ENCODE measurements at regions of chr3 and their contacts with region 1.

Region 1: DNA sequence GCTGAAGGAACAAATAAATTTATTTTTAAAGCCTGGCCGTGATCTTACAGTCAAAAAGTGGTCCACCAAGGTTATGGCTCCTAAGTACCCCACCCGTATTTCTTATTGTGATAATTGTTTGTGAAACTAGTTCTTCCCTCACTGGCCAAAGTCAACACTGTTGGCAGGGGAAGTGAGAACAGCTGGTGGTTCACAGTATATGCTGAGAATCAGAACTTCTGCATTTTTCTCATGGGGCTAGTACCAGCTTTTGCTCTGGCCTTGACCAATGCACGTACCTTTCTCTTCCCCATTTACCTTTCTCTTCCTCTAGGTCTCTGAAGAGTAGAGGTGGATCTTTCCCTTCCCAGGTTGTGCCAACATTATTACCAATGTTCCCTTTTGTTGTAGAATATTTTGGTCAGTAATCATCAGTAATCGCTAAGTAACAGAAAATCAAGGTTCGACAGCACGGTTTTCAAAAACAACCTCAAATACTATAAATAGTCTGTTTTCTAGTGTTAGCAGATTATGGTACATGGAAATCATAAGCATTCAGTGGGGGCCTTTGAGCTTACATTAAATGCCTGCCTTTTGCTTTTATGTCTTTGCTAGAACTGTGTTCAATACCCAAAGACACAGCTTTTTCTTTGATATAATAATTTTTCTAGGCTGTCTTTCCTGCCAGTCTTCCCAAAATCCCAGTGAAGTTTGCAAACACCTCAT is 268.0 kb downstream of the LPP start:
- DNase-seq: peak; percentile 89
- ATAC-seq: peak; percentile 95
- H3K4me3 ChIP-seq: peak overlapping the region in 1 of 5 experiments; percentile 47
- H3K4me3 Mint-ChIP-seq: peak overlapping the region; percentile 74
- H3K27ac ChIP-seq: peak overlapping the region; percentile 89 to 94
- H3K27ac Mint-ChIP-seq: peak overlapping the region; percentile 98
- H3K4me1 ChIP-seq: peaks cover 59 to 72% of the 10 kb centered on the region in 2 donors
- H3K4me1 Mint-ChIP-seq: peaks cover 90% of the 10 kb centered on the region
- H3K27me3 ChIP-seq: no peaks in the 10 kb centered on the region
- H3K27me3 Mint-ChIP-seq: no peaks in the 10 kb centered on the region
- CTCF ChIP-seq: no peak

Region 2: DNA sequence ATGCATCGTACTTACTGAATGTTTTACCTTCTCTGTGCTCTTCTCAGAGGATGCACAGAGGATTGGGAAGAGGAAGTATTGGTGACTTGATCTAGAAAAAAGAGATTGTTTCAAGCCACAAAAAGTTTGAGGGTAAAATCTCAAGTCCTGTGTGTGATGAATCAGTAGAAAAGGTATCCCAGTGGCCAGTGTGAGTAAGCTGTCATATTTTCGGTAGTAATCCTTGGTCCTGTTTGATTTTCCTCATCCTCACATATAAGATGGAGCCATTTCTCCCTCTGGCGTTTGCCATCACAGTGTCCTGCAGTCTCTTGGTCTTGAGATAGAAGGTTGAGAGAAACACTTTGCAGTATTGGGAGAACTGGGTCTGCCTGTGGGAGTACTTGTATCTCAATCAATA is 101.2 kb before region 1 on chr3:
- CTCF ChIA-PET with region 1: no interaction called
- POLR2A ChIA-PET with region 1: no interaction called
- intact Hi-C with region 1: no loop called
- DNase-seq: no peak
- ATAC-seq: no peak
- H3K4me3 ChIP-seq: no peak overlapping the region
- H3K4me3 Mint-ChIP-seq: no peak overlapping the region
- H3K27ac ChIP-seq: no peak overlapping the region
- H3K27ac Mint-ChIP-seq: no peak overlapping the region
- H3K4me1 ChIP-seq: peaks cover 20% of the 10 kb centered on the region in 2 donors
- H3K4me1 Mint-ChIP-seq: peaks cover 50% of the 10 kb centered on the region
- H3K27me3 ChIP-seq: no peaks in the 10 kb centered on the region
- H3K27me3 Mint-ChIP-seq: no peaks in the 10 kb centered on the region
- CTCF ChIP-seq: no peak

Region 3: DNA sequence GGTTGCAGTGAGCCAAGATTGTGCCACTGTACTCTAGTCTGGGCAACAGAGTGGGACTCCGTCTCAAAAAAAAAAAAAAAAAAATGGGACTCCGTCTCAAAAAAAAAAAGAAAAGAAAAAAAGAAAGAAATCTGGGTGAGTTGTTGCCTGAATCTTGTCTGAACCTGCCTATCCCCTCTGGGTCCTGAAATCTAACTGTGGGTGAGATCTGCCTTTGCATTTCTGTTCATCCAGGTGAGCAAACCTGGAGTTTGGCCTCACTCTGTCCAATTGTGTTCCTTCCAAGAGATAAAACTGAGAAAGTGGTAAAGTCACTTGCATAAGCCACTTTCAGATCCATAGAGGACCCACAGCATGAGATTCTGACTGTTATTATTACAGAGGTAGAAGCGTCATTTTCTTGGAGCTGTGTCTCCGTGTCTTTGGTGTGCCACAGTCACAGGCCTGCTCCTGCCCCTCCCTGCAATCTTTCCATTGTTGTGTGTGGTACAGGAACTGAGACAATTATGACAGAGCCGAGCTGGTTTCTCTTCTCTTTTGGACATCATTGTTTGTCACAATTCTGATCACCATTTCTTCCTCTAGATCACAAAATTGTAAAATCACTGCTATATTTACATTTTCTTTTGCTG is 32.2 kb before region 1 on chr3:
- CTCF ChIA-PET with region 1: interaction called, 4 read pairs
- POLR2A ChIA-PET with region 1: interaction called, 6 read pairs
- intact Hi-C with region 1: loop called (anchors 1 kb)
- DNase-seq: peak; percentile 86
- ATAC-seq: peak; percentile 88
- H3K4me3 ChIP-seq: peak overlapping the region in 1 of 5 experiments; percentile 42
- H3K4me3 Mint-ChIP-seq: peak overlapping the region; percentile 82
- H3K27ac ChIP-seq: peak overlapping the region; percentile 94 to 96
- H3K27ac Mint-ChIP-seq: peak overlapping the region; percentile 99
- H3K4me1 ChIP-seq: peaks cover 55 to 75% of the 10 kb centered on the region in 2 donors
- H3K4me1 Mint-ChIP-seq: peaks cover 80% of the 10 kb centered on the region
- H3K27me3 ChIP-seq: no peaks in the 10 kb centered on the region
- H3K27me3 Mint-ChIP-seq: no peaks in the 10 kb centered on the region
- CTCF ChIP-seq: no peak

Region 4: DNA sequence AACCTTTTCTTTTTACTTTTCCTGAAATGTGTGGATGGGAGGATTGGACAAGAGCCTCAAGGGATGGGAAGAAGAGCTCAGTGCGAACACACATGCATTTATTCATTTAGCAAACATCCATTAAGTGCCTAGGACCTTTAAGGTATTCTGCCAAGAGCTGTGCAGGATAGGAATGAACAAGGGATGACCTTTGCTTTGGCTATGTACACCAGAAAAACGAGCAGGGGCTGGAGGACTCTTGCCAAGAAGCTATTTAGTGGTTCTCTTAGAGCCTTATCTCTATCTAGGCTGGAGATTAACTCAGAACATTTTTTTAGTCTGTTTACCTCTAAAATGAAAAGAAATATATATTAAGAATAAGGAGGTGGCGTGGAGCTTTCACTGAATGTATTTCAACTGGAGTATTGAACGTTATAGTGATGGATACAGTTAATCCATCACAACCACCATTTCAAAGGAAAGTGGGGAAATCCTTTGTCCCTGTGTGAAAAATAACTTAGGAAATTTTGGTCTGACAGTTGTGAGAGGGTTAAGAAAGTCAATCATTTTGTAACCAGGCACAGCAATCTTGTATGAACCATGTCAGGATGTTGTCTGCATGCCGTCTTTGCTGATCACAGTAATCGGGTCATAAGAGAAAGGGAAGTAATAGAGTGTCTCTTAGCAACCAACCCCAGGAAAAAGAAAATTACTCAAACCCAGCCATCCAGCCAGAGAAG is 11.0 kb after region 1 on chr3:
- CTCF ChIA-PET with region 1: interaction called, 12 read pairs
- POLR2A ChIA-PET with region 1: interaction called, 3 read pairs
- intact Hi-C with region 1: loop called (anchors 1 kb)
- DNase-seq: peak; percentile 75
- ATAC-seq: peak; percentile 85
- H3K4me3 ChIP-seq: peak overlapping the region in 2 of 5 experiments; percentile 25 to 39
- H3K4me3 Mint-ChIP-seq: peak overlapping the region; percentile 81
- H3K27ac ChIP-seq: peak overlapping the region; percentile 95 to 99
- H3K27ac Mint-ChIP-seq: peak overlapping the region; percentile 98
- H3K4me1 ChIP-seq: peaks cover 57 to 83% of the 10 kb centered on the region in 2 donors
- H3K4me1 Mint-ChIP-seq: peaks cover 81% of the 10 kb centered on the region
- H3K27me3 ChIP-seq: no peaks in the 10 kb centered on the region
- H3K27me3 Mint-ChIP-seq: no peaks in the 10 kb centered on the region
- CTCF ChIP-seq: no peak

Region 5: DNA sequence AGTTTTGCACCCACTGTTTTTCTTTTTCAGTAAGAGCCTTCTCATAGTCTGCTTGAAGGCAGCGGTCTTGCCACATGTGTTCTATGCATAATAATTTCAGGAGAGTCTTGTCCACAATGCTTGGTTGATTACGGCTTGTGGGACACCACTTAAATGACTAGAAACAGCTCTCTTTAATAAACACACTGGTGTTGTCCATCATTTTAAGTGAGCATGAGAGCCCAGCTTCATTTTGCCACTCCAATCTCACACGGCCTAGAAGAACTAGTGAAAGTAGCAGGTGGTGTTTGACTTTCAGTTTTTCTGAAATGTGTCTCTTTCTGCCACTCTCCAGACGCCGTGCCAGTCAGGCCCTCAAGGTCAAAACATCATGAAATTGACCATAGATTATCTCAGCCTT is 24.0 kb after region 1 on chr3:
- CTCF ChIA-PET with region 1: interaction called, 6 read pairs
- POLR2A ChIA-PET with region 1: interaction called, 19 read pairs
- intact Hi-C with region 1: no loop called
- DNase-seq: peak; percentile 56
- ATAC-seq: peak; percentile 62
- H3K4me3 ChIP-seq: peak overlapping the region in 1 of 5 experiments; percentile 20
- H3K4me3 Mint-ChIP-seq: peak overlapping the region; percentile 78
- H3K27ac ChIP-seq: peak overlapping the region; percentile 78 to 88
- H3K27ac Mint-ChIP-seq: peak overlapping the region; percentile 94
- H3K4me1 ChIP-seq: peaks cover 59 to 60% of the 10 kb centered on the region in 2 donors
- H3K4me1 Mint-ChIP-seq: peaks cover 73% of the 10 kb centered on the region
- H3K27me3 ChIP-seq: no peaks in the 10 kb centered on the region
- H3K27me3 Mint-ChIP-seq: no peaks in the 10 kb centered on the region
- CTCF ChIP-seq: no peak

Region 6: DNA sequence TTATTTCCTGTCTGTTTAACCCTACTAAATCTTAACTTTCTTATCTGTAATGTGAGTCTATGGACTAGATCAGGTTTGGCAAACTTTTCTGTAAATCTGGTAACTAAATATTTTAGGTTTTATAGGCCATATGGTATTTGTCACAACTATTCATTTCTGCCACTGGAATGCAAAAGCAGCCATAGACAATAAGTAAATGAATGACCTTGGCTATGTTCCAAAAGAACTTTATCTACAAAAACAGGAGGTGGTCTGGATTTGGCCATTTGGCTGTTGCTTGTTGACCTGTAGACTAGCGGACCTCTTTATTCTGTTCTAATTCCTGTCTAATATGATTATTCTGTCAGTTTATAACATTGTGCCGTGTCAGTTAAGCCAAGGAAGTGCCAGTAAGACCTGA is 46.2 kb after region 1 on chr3:
- CTCF ChIA-PET with region 1: no interaction called
- POLR2A ChIA-PET with region 1: no interaction called
- intact Hi-C with region 1: no loop called
- DNase-seq: no peak
- ATAC-seq: no peak
- H3K4me3 ChIP-seq: no peak overlapping the region
- H3K4me3 Mint-ChIP-seq: no peak overlapping the region
- H3K27ac ChIP-seq: no peak overlapping the region
- H3K27ac Mint-ChIP-seq: no peak overlapping the region
- H3K4me1 ChIP-seq: peaks cover 0 to 8% of the 10 kb centered on the region in 2 donors
- H3K4me1 Mint-ChIP-seq: peaks cover 29% of the 10 kb centered on the region
- H3K27me3 ChIP-seq: no peaks in the 10 kb centered on the region
- H3K27me3 Mint-ChIP-seq: no peaks in the 10 kb centered on the region
- CTCF ChIP-seq: no peak

Region 7: DNA sequence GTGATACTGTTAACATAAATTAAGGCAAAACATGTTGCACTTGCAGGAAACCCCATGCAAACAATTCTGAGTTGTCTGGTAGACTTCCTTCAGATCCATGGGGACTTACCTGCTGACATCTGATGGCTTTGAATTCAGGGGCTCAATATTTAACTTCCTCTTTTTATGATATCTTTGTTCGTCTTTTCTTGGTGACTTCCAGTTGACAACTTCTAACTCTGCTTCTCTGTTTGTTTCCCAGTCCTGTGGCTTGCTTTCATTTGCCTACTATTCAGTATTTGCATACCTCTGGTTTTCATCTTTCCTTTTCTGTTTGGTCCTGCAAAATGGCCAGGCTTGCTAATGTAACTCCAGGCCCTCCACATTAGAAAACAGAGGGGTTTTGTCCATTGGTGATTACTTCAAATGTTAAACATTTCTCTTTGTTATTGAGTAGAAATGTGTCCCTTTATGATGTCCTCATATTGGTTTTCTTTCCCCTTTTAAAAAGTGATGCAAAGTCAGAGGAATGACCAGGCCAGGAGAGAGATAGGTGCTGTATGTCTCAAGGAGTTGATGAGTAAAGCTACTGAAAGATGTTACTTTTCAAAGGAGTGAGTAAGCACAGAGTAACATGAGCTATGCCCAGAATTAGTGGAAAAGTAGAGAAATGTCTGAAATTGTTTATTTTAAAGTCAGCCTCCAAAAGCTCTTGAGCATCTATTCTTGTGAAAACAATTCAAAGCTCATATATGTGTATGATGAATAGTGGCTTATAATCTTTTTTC is 67.8 kb after region 1 on chr3:
- CTCF ChIA-PET with region 1: no interaction called
- POLR2A ChIA-PET with region 1: no interaction called
- intact Hi-C with region 1: no loop called
- DNase-seq: peak; percentile 80
- ATAC-seq: peak; percentile 90
- H3K4me3 ChIP-seq: peak overlapping the region in 1 of 5 experiments; percentile 13
- H3K4me3 Mint-ChIP-seq: peak overlapping the region; percentile 32
- H3K27ac ChIP-seq: peak overlapping the region; percentile 61 to 85
- H3K27ac Mint-ChIP-seq: peak overlapping the region; percentile 81
- H3K4me1 ChIP-seq: peaks cover 32 to 33% of the 10 kb centered on the region in 2 donors
- H3K4me1 Mint-ChIP-seq: peaks cover 43% of the 10 kb centered on the region
- H3K27me3 ChIP-seq: no peaks in the 10 kb centered on the region
- H3K27me3 Mint-ChIP-seq: no peaks in the 10 kb centered on the region
- CTCF ChIP-seq: no peak

Region 8: DNA sequence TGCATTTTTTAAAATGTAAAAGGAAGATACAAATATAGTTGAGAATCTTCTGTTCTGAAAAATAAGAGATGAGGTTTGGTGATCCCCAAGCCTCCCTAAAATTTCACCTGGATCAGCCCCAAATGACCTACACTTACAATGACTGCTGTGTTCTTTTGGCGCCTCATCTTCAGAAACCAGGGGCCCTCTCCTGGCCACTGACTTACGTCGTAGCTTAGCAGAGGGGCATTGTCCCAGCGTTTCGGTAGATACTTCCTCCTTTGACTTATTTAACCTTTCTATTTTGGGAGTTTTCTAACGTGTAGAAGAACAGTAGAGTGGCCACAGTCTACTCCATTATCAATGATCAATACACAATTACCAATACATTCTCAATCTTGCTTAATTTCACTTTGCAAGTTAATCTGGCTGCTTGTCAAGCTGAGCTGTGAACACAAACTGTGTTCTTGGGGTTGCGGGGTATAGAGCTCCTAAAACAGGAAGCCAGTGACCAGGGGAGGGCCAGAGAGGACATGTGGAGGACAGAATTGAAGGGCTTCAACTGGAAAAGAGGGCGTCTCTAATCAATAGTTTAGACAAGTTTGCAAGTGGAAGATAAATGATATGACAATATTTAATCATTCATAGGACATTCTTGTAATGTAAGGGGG is 151.4 kb after region 1 on chr3:
- CTCF ChIA-PET with region 1: no interaction called
- POLR2A ChIA-PET with region 1: no interaction called
- intact Hi-C with region 1: no loop called
- DNase-seq: peak; percentile 59
- ATAC-seq: peak; percentile 62
- H3K4me3 ChIP-seq: no peak overlapping the region
- H3K4me3 Mint-ChIP-seq: peak overlapping the region; percentile 52
- H3K27ac ChIP-seq: no peak overlapping the region
- H3K27ac Mint-ChIP-seq: peak overlapping the region; percentile 57
- H3K4me1 ChIP-seq: peaks cover 11 to 20% of the 10 kb centered on the region in 2 donors
- H3K4me1 Mint-ChIP-seq: peaks cover 26% of the 10 kb centered on the region
- H3K27me3 ChIP-seq: no peaks in the 10 kb centered on the region
- H3K27me3 Mint-ChIP-seq: no peaks in the 10 kb centered on the region
- CTCF ChIP-seq: peak; percentile 22

Measured in B cell (primary cell).